ENCODE measurements at regions of chr13 and their contacts with region 1.

Region 1: GRCh38 chr13:30107581-30107992 is 199.8 kb downstream of the KATNAL1 start:
- DNase-seq: no peak
- H3K4me3 ChIP-seq: no peak overlapping the region
- H3K27ac ChIP-seq: no peak overlapping the region
- H3K27me3 ChIP-seq: no peaks in the 10 kb centered on the region
- CTCF ChIP-seq: no peak

Region 2: DNA sequence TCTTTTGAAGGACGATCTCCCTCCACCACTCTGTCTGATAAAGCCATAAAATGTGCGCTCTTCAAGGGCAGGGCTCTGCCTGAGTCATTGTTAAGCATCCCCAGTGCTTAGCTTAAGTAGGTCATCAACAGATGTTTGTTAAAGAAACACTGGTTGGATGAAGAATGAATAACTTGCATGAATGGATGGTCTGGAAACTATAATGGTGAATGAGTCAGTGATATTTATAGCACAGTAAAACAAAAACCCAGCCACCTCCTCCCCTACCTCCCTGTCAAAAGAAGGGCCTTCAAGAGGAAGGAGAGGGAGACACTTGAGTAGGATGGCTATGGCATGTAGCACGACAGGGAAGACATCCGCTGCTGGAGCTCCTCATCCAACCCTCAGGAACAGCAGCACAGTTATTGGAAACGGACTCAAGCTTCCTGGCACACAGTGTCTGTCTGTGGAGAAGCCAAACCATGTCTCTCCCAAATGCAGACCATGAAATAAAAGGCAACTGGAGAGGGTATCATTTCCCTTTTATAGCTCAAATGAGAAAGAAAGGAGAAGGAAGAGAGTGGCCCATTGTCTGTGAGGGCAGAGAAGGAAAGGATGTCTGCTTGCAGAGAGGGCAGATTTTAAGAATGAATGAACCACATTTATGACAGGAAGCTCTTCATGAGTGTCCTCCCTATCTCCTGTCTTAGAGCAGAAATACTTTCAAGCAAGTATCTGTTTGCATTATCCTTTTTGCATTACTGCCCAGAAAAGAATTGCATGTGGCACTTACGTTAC is 73.7 kb before region 1 on chr13:
- intact Hi-C with region 1: loop called in 1 of 2 experiments (anchors 10 kb)
- DNase-seq: no peak
- H3K4me3 ChIP-seq: peak overlapping the region in 25 of 59 donors; percentile 0 to 44 (median 22)
- H3K27ac ChIP-seq: peak overlapping the region in 46 of 59 donors; percentile 2 to 86 (median 46)
- H3K27me3 ChIP-seq: no peaks in the 10 kb centered on the region
- CTCF ChIP-seq: no peak

Region 3: DNA sequence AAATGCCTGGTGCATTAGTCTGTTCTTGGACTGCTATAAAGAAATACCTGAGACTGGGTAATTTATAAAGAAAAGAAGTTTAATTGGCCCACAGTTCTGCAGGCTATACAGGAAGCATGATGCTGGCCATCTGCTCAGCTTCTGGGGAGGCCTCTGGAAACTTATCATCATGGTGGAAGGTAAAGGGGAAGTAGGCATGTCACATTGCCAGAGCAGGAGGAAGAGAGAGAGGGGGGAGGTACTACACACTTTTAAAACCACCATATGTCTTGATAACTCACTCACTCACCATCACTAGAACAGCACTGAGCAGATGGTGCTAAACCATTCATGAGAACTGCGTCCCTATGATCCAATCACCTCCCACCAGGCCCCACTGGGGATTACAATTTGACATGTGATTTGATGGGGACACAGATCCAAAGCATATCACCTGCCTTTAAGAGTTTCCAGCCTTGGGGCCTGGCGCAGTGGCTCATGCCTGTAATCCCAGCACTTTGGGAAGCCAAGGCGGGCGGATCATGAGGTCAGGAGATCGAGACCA is 19.2 kb before region 1 on chr13:
- intact Hi-C with region 1: no loop called
- DNase-seq: no peak
- H3K4me3 ChIP-seq: no peak overlapping the region
- H3K27ac ChIP-seq: no peak overlapping the region
- H3K27me3 ChIP-seq: no peaks in the 10 kb centered on the region
- CTCF ChIP-seq: no peak

Measured in dorsolateral prefrontal cortex (tissue), 120 donors.